IMR-90 (cell line): ENCODE measurements at regions of chr19 and their contacts with region 1.

Region 1: DNA sequence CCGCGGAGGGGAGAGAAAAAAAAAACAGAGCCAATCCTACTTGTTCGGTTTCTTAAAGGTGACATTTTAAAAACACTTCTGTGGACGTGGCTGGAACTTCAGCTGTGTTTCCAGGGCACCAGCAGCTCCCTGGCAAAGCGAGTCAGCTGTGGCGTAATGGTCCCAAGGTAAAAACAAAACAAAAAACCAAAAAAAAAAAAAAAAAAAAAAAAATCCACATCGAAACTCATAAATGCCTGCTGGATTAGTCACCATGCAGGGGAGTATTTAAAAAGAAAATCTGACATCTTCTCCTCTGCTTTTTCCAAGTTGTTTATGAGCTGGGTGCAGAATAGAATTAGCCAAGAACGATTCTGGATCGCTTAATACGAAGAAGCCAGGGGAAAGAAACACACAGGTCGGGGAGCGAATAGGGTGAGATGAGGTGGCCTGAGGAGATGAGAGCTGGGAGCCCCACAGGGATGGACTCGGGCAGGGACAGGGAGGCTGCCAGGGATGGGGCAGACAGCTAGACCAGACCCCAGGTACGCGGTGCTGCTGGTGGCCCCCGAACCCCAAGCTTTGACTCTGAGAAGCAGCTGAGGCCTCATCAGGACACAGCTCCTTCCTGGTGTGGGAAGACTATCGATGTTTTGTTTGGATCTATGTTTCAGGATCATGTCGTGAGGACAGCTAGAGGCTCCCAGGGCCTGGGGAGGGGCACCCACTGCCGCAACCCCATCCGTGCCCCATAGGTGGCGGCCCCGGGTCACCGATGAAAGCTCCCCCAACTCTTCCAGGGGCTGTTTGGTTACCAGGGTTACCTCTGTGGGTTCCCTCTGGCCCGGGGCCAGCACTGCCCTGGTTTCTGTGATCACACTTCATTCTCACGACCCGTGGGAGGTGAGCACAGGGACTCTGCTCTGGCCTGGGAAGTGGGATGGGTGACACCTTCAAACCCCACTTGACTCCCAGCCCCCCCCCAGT is 3.1 kb upstream of the CTXN1 start:
- DNase-seq: peak; percentile 88
- ATAC-seq: peak; percentile 13
- H3K4me3 ChIP-seq: no peak overlapping the region
- H3K27ac ChIP-seq: peak overlapping the region; percentile 95
- H3K4me1 ChIP-seq: peaks cover 21% of the 10 kb centered on the region
- H3K27me3 ChIP-seq: no peaks in the 10 kb centered on the region
- CTCF ChIP-seq: peak; percentile 46
- POLR2A ChIP-seq: no peak
- RAD21 ChIP-seq: peak; percentile 31; the same call in 1 of the 2 replicates

Region 2: GRCh38 chr19:7903244-7904073 is 25.6 kb before region 1 on chr19 and contains the start of gene MAP2K7:
- CTCF ChIA-PET with region 1: no interaction called
- POLR2A ChIA-PET with region 1: interaction called, 14 read pairs
- dilution Hi-C with region 1: no loop called
- in situ Hi-C with region 1: no loop called
- intact Hi-C with region 1: no loop called
- DNase-seq: peak; percentile 99
- ATAC-seq: peak; percentile 91
- H3K4me3 ChIP-seq: peak within 1 kb of the TSS; percentile 66
- H3K27ac ChIP-seq: peak within 1 kb of the TSS; percentile 91
- H3K4me1 ChIP-seq: peaks cover 10% of the 10 kb centered on the region
- H3K27me3 ChIP-seq: no peaks in the 10 kb centered on the region
- CTCF ChIP-seq: peak; percentile 80
- POLR2A ChIP-seq: peak; percentile 86
- RAD21 ChIP-seq: peak; percentile 51
- total RNA-seq, gene MAP2K7: 3.9 and 4.1 TPM in 2 replicates